ENCODE measurements at regions of chr11 and their contacts with region 1.

Region 1: DNA sequence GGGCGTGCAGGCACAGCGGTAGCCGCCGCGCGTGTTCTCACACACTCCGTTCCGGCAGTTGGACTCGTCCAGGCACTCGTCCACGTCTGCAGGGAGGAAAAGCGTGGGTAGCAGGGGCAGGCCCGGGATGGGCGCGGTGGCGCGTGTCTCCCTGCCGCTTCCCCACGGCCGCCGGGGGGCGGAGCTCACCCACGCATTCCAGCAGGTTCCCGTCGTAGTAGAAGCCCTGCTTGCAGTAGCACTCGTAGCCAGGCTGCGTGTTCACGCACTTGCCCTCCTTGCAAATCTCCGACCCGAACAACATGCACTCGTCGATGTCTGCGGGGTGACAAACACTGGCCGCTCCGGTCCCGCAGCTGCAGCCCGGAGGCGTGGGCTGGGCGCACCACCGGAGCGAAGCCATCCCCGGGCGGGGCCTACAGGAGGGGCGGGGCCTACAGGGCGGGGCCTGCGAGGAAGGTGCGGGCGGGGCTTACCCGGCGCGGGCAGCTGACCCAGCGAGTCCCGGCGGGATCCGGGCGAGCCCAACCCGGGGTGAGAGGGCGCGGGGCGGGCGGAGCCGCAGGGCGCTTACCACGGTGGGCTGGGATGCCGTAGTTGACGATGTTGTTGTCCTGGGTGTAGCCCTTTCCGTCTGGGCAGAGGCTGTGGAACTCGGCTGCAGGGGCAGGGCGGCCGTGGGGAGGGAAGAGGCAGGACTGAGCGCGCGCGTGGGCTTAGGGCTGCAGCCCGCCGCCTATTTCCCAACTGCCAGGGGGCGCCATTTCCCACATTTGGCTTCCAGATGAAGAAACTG is 15.6 kb downstream of the SCYL1 start:
- DNase-seq: peak; percentile 81 to 94 (median 90)
- H3K4me3 ChIP-seq: peak overlapping the region; percentile 25 to 84 (median 59)
- H3K27ac ChIP-seq: peak overlapping the region; percentile 77 to 99 (median 94)
- H3K27me3 ChIP-seq: no peaks in the 10 kb centered on the region
- CTCF ChIP-seq: peak; percentile 63 to 95 (median 81)

Region 2: DNA sequence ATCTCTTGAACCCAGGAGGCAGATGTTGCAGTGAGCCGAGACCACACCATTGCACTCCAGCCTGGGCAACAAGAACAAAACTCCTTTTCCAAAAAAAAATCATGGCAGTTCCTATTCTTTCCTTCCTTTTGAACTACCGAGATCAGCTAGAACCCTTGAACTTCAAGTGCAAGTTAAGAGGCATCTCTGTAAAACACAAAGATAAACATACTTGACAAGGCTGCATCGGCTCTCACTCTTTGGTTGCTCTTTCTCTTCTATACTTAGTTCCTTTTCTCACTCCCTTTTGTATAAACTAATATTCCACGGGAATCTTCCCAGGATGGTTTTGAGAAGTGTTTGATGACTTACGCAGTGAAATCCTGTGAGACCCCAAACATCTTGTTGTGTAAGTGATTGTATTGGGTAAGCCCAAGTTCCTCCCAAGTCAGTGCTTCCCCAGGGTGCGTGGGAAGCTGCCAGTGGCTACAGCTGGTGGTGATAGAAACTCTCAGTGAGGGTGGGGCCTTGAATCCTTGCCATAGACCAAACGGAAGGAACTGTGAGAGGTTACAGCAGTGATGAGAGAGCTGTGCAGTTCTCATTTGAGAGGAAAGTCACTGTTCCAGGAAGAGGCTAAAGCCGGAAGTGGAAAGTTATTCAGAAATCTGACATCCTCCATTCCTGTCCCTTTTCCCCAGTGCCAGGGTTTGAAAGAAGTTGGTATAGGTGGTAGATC is 249.9 kb before region 1 on chr11:
- intact Hi-C with region 1: no loop called
- DNase-seq: peak in 9 of 10 donors; percentile 17 to 92 (median 86)
- H3K4me3 ChIP-seq: peak overlapping the region in 52 of 59 donors; percentile 0 to 63 (median 34)
- H3K27ac ChIP-seq: peak overlapping the region; percentile 83 to 100 (median 98)
- H3K27me3 ChIP-seq: no peaks in the 10 kb centered on the region
- CTCF ChIP-seq: peak in 6 of 56 donors; percentile 6 to 18 (median 11)

Region 3: GRCh38 chr11:65454696-65455456 is 85.6 kb before region 1 on chr11:
- intact Hi-C with region 1: no loop called
- DNase-seq: peak; percentile 75 to 91 (median 86)
- H3K4me3 ChIP-seq: peak overlapping the region; percentile 34 to 73 (median 58)
- H3K27ac ChIP-seq: peak overlapping the region; percentile 33 to 95 (median 85)
- H3K27me3 ChIP-seq: no peaks in the 10 kb centered on the region
- CTCF ChIP-seq: peak in 49 of 56 donors; percentile 9 to 63 (median 36)

Region 4: GRCh38 chr11:65477149-65477965 is 63.1 kb before region 1 on chr11:
- intact Hi-C with region 1: no loop called
- DNase-seq: peak; percentile 93 to 97 (median 96)
- H3K4me3 ChIP-seq: peak overlapping the region; percentile 64 to 100 (median 86)
- H3K27ac ChIP-seq: peak overlapping the region; percentile 91 to 100 (median 100)
- H3K27me3 ChIP-seq: no peaks in the 10 kb centered on the region
- CTCF ChIP-seq: peak in 15 of 56 donors; percentile 7 to 43 (median 19)

Region 5: DNA sequence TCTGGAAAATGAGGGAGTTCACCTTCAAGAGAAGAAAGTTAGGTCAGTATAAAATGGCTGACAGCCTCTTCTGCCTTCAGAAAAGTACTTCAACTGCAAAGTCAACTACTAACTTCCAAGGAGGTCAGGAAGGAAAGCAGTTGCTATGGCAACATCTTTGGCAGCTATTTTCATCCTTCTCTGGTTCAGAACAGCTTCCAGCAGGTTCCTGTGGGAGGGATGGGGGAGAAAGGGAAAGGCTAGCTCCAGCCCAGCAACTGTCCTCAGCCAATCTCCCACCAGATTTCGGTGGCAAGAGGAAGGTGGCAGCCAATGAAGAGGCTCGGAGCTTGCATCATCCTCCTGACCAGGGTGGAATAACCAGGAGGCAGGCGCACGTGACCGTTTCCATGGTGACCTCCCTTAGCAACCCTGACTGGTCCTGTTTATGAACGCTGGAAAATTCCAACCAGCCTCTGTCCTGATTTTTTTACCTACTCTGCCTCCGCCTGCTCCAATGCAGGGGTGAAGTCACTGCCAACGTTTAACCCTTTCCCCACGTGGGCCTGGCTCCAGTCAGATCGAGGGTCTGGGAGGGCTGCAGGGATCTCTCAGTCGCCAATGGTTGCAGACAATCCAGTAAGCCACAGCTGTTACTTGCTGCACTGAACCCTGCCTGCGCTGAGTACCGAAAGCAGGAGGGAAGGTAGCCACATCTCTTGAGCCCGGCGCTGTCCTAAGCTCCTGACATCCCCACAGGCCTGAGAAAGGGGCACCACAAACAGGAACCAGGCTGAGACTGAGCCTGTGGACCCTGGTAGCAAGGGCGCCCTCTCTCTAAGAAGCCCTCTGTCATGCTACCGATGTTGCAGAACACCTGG is 52.9 kb before region 1 on chr11:
- intact Hi-C with region 1: no loop called
- DNase-seq: peak; percentile 100
- H3K4me3 ChIP-seq: peak overlapping the region in 54 of 59 donors; percentile 2 to 60 (median 37)
- H3K27ac ChIP-seq: peak overlapping the region; percentile 98 to 100 (median 100)
- H3K27me3 ChIP-seq: no peaks in the 10 kb centered on the region
- CTCF ChIP-seq: peak in 21 of 56 donors; percentile 6 to 49 (median 23)

Region 6: DNA sequence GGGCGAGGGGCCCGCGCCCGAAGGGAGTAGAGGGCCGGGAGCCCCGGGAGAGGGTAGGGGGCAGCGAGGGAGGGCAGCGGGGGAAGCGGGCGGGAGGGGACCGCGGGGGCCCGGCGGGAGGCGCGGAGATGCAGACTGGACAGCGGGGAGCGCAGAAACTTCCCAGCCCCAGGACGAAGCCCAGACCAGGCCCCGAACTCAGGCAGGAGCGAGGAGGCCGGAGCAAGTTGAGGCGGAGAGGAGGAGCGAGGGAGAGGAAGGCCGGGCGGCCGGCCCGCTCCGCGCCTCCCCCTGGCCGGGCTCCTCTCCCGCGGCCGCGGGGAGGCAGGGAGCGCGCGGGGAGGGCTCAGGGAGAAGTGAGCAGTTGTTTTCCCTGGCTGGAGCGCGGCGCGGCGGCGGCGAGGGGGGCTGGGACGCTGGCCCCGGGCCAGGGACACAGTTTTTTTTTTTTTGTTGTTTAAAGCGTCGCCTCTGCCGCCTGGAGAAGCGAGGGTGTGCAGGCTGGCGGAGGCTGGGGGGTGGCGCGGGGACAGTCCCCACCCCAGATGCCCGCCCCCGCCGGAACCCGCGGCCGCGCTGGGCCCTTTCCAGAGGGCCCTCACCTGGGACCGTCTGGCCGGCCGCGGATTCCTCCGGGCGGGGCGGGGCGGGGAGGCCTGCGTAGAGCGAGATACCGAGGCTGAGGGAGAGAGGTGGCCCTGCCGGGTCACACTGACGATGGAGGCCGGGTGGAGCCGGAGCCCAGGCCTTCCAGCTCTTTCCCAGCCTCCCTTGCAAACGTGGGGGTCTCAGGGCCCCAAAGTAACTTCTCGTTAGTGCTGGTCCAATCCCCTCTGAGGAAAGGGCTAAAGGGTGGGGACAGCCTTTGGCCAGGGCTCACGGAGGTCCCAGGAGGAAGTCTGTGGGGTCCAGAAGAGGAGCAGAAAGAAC is 17.8 kb after region 1 on chr11 and contains the start of gene LTBP3:
- intact Hi-C with region 1: loop called in 1 of 2 experiments (anchors 2 kb)
- DNase-seq: peak; percentile 69 to 90 (median 80)
- H3K4me3 ChIP-seq: peak within 1 kb of the TSS; percentile 56 to 91 (median 70)
- H3K27ac ChIP-seq: peak within 1 kb of the TSS; percentile 80 to 100 (median 98)
- H3K27me3 ChIP-seq: no peaks in the 10 kb centered on the region
- CTCF ChIP-seq: peak in 45 of 56 donors; percentile 11 to 54 (median 34)
- total RNA-seq, gene LTBP3: 97.2 to 228 (median 145) TPM

Region 7: GRCh38 chr11:65593518-65594298 is 53.2 kb after region 1 on chr11:
- intact Hi-C with region 1: loop called (anchors 1 to 10 kb)
- DNase-seq: peak; percentile 61 to 80 (median 74)
- H3K4me3 ChIP-seq: peak overlapping the region in 31 of 59 donors; percentile 0 to 51 (median 24)
- H3K27ac ChIP-seq: peak overlapping the region in 58 of 59 donors; percentile 13 to 86 (median 72)
- H3K27me3 ChIP-seq: no peaks in the 10 kb centered on the region
- CTCF ChIP-seq: peak; percentile 59 to 92 (median 83)

Measured in dorsolateral prefrontal cortex (tissue), 120 donors.